GM18951 (cell line): ENCODE measurements at regions of chr19 and their contacts with region 1.

Region 1: GRCh38 chr19:12757544-12758274 is 6.1 kb downstream of the BEST2 start:
- POLR2A ChIP-seq: no peak

Region 2: GRCh38 chr19:12574036-12574435 is 183.7 kb before region 1 on chr19:
- in situ Hi-C with region 1: loop called (anchors 5 kb)
- POLR2A ChIP-seq: no peak

Region 3: DNA sequence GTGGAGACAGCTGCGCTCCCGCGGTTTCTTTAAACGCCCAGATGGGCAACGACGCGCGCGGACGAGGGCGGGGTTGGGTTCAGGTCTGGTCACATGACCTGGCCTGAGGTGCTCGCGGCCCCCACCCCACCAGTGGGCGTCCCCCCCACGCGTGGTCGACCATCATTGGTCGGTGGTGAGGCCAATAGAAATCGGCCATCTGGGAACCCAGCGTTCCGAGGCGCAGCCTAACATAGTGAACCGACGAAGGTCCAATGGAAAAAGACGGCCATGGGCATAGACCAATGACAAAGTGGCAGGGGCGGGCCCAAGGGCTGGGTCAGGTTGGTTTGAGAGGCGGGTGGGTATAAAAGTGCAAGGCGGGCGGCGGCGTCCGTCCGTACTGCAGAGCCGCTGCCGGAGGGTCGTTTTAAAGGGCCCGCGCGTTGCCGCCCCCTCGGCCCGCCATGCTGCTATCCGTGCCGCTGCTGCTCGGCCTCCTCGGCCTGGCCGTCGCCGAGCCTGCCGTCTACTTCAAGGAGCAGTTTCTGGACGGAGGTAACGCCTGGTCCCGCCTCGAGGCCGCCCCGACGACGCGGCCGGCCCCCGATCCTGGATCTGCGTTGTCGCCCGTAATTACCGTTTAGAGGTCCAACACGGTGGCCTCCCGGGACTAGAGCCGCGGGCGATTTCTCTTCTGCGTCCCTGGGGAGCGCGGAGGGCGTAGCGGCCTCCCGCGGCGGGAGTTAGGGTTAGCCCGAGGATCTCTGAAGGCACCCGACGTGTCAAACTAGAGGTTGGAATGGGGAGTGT is 180.7 kb after region 1 on chr19 and contains the start of gene CALR:
- in situ Hi-C with region 1: no loop called
- POLR2A ChIP-seq: peak; percentile 100